GM23248 (cell line): ENCODE measurements at regions of chr6 and their contacts with region 1.

Region 1: DNA sequence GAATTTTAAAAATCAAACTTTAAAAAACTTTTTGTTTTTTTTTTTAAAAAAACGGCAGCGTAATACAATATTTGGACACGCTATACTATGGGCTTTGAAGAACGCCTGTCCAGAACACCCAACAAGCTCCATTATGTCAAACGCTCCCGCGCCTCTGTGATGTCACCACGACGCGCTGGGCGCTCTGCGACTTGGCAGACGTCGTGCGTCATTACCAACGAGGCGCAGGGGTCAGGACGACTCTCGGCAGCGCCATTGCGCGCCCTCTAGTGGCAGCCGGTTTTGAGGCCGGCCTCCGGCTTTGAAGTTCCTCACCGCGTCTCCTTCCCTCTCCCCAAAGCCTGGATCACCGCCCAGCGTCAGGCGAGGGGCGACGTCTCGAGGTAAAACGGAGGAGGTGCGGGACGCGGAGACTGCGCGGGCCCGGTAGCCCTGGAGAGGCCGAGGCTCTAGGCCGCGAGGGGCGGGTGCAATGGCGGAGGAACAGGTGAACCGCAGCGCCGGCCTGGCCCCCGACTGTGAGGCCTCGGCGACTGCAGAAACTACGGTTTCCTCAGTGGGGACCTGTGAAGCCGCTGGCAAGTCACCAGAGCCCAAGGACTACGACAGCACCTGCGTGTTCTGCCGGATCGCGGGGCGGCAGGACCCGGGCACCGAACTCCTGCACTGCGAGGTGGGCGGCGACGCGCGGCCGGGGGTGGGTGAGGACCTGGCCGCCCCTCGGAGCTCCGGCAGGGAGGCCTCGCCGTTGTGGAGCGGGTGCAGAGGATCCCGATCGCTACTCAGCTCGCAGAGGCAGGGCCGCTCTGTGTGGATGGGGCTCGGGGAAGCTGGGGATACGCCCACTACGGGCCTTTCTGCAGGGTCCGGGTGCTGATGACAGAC is at the start of gene HINT3:
- DNase-seq: peak; percentile 99
- H3K4me3 ChIP-seq: peak within 1 kb of the TSS; percentile 75
- H3K27ac ChIP-seq: peak within 1 kb of the TSS; percentile 28
- H3K4me1 ChIP-seq: 0 out of 2 replicates have a peak, but pooled peaks cover 12% of the 10 kb centered on the region
- H3K27me3 ChIP-seq: no peaks in the 10 kb centered on the region
- total RNA-seq, gene HINT3: 20.5 and 21.8 TPM in 2 replicates

Region 2: GRCh38 chr6:125170376-125170775 is 786.4 kb before region 1 on chr6:
- in situ Hi-C with region 1: no loop called
- DNase-seq: peak; percentile 85
- H3K4me3 ChIP-seq: no peak overlapping the region
- H3K27ac ChIP-seq: peak overlapping the region; percentile 20; the same call in 1 of the 2 replicates
- H3K4me1 ChIP-seq: peaks cover 25% of the 10 kb centered on the region
- H3K27me3 ChIP-seq: no peaks in the 10 kb centered on the region

Region 3: DNA sequence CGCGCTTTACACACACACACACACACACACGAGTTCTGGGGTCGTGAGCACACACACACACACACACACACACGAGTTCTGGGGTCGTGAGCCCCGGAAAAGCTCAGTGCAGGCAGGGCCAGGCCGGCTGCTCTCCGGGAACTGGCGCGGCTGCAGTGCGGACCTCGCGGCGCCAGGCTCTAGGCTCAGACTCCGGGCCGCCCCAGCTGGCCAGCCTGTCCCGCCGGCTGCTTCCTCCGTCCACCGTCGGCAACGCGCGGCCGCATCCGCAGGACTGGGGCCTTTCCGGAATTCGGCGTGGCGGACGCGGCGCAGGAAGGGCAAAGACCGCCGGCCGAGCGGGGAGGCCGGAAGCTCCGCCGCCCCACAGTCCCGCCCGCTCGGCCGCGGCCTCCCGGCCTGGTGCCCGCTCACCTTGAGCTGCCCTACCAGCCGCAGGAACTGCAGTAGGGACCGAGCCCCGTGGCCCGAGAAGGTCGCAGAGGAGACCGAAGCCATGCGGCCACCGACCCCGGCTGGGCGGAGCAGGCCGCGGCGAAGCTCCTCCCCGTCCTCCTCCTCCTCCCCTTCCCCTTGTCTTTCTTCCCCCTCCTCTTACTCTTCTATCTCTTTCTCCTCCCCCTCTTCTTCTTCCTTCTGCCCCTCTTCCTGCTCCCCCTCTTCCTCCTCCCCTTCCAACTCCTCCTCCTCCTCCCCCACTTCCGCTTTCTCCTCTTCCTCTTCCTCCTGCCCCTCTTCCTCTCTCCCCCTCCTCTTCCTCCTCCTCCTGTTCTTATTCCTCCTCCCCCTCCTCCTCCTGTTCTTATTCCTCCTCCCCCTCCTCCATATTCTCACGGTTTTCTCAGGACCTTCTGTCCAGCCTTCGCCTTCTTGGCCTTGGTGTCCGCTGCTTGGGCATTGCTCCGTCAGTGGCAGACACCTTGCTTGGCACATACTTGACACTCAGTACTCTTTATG is 655.0 kb before region 1 on chr6 and contains the start of gene HDDC2:
- in situ Hi-C with region 1: loop called (anchors 10 kb)
- DNase-seq: peak; percentile 90
- H3K4me3 ChIP-seq: peak within 1 kb of the TSS; percentile 82
- H3K27ac ChIP-seq: peak within 1 kb of the TSS; percentile 61
- H3K4me1 ChIP-seq: peaks cover 19% of the 10 kb centered on the region
- H3K27me3 ChIP-seq: peaks cover 6% of the 10 kb centered on the region; the same call in 1 of the 2 replicates
- total RNA-seq, gene HDDC2: 51.1 and 55.1 TPM in 2 replicates

Region 4: GRCh38 chr6:125789576-125790357 is 167.0 kb before region 1 on chr6:
- in situ Hi-C with region 1: loop called (anchors 5 kb)
- DNase-seq: peak; percentile 67
- H3K4me3 ChIP-seq: peak overlapping the region; percentile 78
- H3K27ac ChIP-seq: peak overlapping the region; percentile 93
- H3K4me1 ChIP-seq: peaks cover 33% of the 10 kb centered on the region
- H3K27me3 ChIP-seq: no peaks in the 10 kb centered on the region